ENCODE measurements at regions of chr10 and their contacts with region 1.

Region 1: DNA sequence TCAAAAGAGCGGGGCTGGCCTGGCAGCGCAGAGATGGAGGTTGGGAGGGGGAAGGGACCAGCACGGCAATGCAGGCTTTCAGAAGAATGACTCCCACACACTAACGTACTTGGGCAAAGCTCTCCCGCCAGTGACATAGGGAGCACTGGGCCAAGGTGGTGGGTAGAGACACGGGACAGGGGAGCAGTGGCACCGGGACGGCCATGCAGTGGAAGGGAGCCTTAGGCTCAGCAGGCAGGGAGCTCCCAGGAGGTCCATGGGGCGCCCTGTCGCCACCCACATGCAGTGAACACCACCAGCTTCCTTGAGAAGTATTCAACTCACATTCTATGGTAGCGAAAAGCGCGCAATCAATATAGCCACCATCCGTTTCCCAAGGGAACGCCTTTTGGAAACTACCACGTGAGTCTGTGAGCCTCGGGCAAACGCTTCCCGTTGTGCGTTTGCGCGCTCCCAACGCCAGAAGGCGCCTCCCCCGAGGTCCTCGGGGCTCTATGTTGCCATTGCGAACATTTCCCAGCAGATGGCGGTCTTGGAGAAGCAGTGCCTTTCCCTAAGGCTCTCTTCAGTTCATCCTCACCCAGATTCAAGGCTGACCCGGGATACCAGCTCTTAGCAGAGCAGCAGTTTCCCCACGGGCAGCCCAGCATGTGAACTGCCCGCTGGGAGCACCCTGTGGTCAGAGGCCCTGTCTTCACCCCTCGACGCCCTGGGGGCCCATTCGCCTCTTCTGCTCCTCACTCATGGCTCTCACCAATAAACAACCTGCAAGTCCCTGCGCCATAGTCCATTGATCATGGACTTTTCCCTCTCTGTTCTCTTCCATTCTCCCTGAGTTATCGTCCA is 16.4 kb upstream of the OPALIN start:
- DNase-seq: peak; percentile 80
- ATAC-seq: peak; percentile 85
- H3K4me3 Mint-ChIP-seq: peak overlapping the region; percentile 59
- H3K27ac Mint-ChIP-seq: no peak overlapping the region
- H3K4me1 Mint-ChIP-seq: peaks cover 23% of the 10 kb centered on the region
- H3K27me3 Mint-ChIP-seq: peaks cover 46% of the 10 kb centered on the region

Region 2: GRCh38 chr10:96176985-96177384 is 198.2 kb before region 1 on chr10:
- CTCF ChIA-PET with region 1: no interaction called
- DNase-seq: no peak
- ATAC-seq: no peak
- H3K4me3 Mint-ChIP-seq: no peak overlapping the region
- H3K27ac Mint-ChIP-seq: no peak overlapping the region
- H3K4me1 Mint-ChIP-seq: no peaks in the 10 kb centered on the region
- H3K27me3 Mint-ChIP-seq: peaks cover 42% of the 10 kb centered on the region

Region 3: GRCh38 chr10:96395931-96396877 is 21.0 kb after region 1 on chr10:
- CTCF ChIA-PET with region 1: interaction called, 11 read pairs
- DNase-seq: peak; percentile 71
- ATAC-seq: peak; percentile 92
- H3K4me3 Mint-ChIP-seq: no peak overlapping the region
- H3K27ac Mint-ChIP-seq: no peak overlapping the region
- H3K4me1 Mint-ChIP-seq: no peaks in the 10 kb centered on the region
- H3K27me3 Mint-ChIP-seq: peaks cover 52% of the 10 kb centered on the region

Region 4: DNA sequence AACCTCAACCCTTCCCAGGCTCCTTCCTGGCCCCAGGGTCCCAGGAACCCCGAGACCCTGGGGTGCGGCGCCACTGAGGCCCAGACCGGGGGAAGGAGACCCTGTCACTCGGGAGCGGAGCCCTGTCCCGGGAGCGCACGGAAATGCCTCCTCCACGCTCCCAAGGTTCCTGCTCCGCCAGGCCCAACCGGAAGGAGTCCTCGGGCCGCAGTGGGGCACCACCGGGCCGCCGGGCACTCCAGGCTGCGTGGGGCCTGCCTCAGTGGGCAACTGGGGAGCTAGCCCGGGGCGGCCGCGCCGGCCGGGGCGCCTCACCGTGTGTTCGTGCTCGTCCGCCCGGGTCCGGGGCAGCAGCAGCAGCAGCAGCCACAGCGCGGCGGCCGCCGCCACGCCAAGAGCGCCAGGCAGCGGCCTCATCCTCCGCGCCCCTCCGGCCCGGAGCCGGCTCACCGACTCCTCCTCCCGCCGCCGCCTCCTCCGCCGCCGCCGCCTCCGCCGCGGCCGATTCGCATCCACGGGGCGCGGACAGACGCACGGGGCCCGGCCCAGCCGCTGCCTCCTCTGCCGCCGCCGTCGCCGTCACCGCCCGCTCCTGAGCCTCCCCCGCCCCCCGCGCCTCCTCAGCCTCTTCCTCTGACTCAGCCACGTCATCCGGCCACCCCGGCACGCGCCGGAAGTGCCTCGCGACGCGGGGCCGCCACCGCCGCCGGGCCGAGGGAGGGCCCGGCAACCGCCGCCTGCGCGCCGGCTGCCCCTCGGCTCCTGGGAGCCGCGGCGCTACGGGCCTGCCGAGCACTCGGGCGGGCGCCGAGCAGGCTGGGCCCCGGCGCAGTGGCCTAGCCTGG is 211.4 kb after region 1 on chr10 and contains the start of gene TM9SF3:
- CTCF ChIA-PET with region 1: no interaction called
- DNase-seq: peak; percentile 94
- ATAC-seq: peak; percentile 85
- H3K4me3 Mint-ChIP-seq: no peak within 1 kb of the TSS
- H3K27ac Mint-ChIP-seq: peak within 1 kb of the TSS; percentile 91
- H3K4me1 Mint-ChIP-seq: peaks cover 31% of the 10 kb centered on the region
- H3K27me3 Mint-ChIP-seq: peaks cover 6% of the 10 kb centered on the region
- total RNA-seq, gene TM9SF3: 61.4 to 71.3 TPM

Measured in activated CD8-positive, alpha-beta memory T cell treated with anti-CD3 and anti-CD28 coated beads, Interleukin-2, amount 10 ng/mL, durations not matched to agents 7 days and 5 days (primary cell).